Activated B cell treated with CpG ODN at 0.5 μM for 24 hours (primary cell): ENCODE measurements at regions of chr1 and their contacts with region 1.

Region 1: DNA sequence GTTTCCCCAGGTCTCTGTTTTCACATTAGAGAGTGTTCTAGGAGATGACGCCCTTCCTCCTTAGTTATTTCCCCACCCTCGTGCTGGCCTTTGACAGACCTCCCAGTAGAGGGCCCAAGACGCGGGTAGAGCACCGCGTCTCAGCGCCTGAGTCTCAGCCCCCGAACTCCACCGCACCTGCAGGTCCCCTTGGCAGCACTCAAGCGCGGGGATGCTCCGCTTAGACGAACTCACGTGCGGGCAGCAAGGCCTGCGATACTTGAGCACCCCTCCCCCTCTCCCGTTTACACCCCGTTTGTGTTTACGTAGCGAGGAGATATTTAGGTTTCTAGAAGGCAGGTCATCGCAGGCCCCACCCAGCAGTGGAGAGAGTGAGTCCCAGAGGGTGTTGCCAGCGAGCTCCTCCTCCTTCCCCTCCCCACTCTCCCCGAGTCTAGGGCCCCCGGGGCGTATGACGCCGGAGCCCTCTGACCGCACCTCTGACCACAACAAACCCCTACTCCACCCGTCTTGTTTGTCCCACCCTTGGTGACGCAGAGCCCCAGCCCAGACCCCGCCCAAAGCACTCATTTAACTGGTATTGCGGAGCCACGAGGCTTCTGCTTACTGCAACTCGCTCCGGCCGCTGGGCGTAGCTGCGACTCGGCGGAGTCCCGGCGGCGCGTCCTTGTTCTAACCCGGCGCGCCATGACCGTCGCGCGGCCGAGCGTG is at the start of gene CD55:
- DNase-seq: peak; percentile 94
- ATAC-seq: peak; percentile 87
- H3K4me3 Mint-ChIP-seq: peak within 1 kb of the TSS; percentile 94
- H3K27ac Mint-ChIP-seq: peak within 1 kb of the TSS; percentile 100
- H3K4me1 Mint-ChIP-seq: peaks cover 65% of the 10 kb centered on the region
- H3K27me3 Mint-ChIP-seq: no peaks in the 10 kb centered on the region
- CTCF ChIP-seq: no peak
- total RNA-seq, gene CD55: 90.9 and 91.1 TPM in 2 replicates

Region 2: GRCh38 chr1:207084701-207085180 is 236.5 kb before region 1 on chr1:
- CTCF ChIA-PET with region 1: interaction called, 3 read pairs
- POLR2A ChIA-PET with region 1: interaction called, 8 read pairs
- intact Hi-C with region 1: loop called (anchors 2 kb)
- DNase-seq: no peak
- ATAC-seq: peak; percentile 98
- H3K4me3 Mint-ChIP-seq: no peak overlapping the region
- H3K27ac Mint-ChIP-seq: no peak overlapping the region
- H3K4me1 Mint-ChIP-seq: peaks cover 9% of the 10 kb centered on the region
- H3K27me3 Mint-ChIP-seq: peaks cover 2% of the 10 kb centered on the region
- CTCF ChIP-seq: no peak

Region 3: DNA sequence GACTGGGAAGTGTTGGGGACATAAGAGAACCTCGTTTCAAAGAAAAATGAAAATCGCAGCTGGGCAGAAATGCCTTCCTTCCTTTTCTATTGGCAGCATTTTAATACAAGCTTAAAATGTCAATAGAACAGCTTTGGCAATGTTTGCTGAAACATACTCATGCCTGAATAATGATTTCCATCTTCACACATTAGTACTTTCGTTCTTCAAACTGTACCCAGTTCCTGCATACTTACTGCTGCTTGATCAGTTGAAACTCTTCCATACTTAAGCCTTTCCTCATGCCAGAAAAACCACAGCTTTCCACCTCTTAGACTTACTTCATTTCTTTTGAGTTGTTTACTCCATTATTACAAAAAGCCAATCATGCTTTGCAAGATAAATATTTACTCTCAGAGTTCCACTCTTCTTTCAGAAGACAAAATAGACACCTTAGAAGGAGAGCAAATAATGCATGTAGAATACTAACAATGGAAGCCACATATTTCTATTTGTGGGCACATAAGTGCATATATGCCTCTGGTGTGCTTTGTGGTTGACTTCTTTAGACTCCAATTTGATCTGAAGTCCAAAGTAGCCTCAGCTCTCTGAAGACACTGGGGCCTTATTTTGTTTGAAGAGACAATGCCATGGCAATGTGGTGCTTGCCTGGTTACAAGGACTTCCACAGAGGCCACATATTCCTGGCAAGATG is 22.4 kb before region 1 on chr1:
- CTCF ChIA-PET with region 1: no interaction called
- POLR2A ChIA-PET with region 1: interaction called, 11 read pairs
- intact Hi-C with region 1: no loop called
- DNase-seq: no peak
- ATAC-seq: no peak
- H3K4me3 Mint-ChIP-seq: peak overlapping the region; percentile 0
- H3K27ac Mint-ChIP-seq: peak overlapping the region; percentile 85
- H3K4me1 Mint-ChIP-seq: peaks cover 25% of the 10 kb centered on the region
- H3K27me3 Mint-ChIP-seq: no peaks in the 10 kb centered on the region
- CTCF ChIP-seq: no peak

Region 4: DNA sequence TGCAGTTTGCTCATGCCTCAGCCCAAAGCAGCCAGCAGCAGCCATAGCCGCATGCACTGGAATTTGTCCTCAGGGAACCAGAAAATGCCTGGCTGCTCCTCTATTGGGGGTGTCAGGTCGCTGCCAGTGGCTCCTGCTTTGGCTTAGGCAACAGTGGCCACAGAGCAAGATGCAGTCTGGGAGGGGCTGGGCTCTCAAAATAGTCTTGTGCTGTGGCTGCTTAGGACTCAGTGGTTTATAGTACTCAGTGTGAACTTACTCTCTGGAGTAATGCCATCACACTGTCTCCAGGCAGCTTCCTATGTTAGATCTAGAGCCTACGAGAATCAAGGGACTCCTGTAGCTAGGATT is 25.3 kb after region 1 on chr1:
- CTCF ChIA-PET with region 1: interaction called, 3 read pairs
- POLR2A ChIA-PET with region 1: interaction called, 13 read pairs
- intact Hi-C with region 1: no loop called
- DNase-seq: no peak
- ATAC-seq: no peak
- H3K4me3 Mint-ChIP-seq: no peak overlapping the region
- H3K27ac Mint-ChIP-seq: no peak overlapping the region
- H3K4me1 Mint-ChIP-seq: peaks cover 85% of the 10 kb centered on the region
- H3K27me3 Mint-ChIP-seq: no peaks in the 10 kb centered on the region
- CTCF ChIP-seq: no peak

Region 5: DNA sequence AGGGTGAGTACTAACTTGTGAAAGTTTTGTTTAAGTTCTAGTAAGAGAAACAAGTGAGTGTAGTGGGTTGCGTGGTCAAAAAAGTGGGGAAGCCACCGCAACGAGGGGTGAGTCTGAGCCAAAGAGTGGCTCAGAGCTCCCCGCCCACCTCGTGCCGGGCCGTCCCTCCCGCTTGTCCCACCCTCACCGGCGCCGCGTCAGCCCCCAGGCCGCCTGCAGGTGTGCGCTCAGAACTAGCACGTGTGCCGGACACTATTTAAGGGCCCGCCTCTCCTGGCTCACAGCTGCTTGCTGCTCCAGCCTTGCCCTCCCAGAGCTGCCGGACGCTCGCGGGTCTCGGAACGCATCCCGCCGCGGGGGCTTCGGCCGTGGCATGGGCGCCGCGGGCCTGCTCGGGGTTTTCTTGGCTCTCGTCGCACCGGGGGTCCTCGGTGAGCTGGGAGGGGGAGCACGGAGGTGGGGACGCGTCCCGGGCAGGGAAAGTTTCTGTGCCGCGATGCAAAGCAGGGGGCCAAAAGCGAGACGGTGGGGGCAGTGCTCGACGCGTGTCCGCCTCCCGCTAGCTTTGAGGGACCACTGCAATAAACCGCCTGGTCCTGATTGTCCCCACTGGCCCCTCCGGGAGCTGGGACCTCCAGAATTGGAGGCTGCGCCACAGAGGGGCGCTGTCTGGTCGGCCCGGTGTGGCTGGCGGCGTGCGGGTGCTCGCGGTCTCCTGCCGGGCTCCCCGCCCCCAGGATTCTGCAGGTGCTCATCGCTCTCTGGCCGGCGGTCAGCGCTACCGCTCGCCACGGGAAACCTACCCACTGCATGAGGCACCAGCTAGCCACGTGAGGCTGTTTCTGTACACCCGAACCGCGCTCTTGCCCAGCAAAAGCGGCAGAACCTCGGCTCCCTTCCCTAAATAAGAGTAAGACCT is 133.1 kb after region 1 on chr1 and contains the start of gene CR2:
- CTCF ChIA-PET with region 1: no interaction called
- POLR2A ChIA-PET with region 1: interaction called, 50 read pairs
- intact Hi-C with region 1: loop called (anchors 1 kb)
- DNase-seq: peak; percentile 74
- ATAC-seq: peak; percentile 90
- H3K4me3 Mint-ChIP-seq: no peak within 1 kb of the TSS
- H3K27ac Mint-ChIP-seq: no peak within 1 kb of the TSS
- H3K4me1 Mint-ChIP-seq: peaks cover 4% of the 10 kb centered on the region
- H3K27me3 Mint-ChIP-seq: no peaks in the 10 kb centered on the region
- CTCF ChIP-seq: no peak
- total RNA-seq, gene CR2: 30.7 and 34.1 TPM in 2 replicates